Activated CD8-positive, alpha-beta T cell treated with anti-CD3 and anti-CD28 coated beads, Interleukin-2, amount 10 ng/mL, durations not matched to agents 7 days and 5 days (primary cell): ENCODE measurements at regions of chr3 and their contacts with region 1.

Region 1: DNA sequence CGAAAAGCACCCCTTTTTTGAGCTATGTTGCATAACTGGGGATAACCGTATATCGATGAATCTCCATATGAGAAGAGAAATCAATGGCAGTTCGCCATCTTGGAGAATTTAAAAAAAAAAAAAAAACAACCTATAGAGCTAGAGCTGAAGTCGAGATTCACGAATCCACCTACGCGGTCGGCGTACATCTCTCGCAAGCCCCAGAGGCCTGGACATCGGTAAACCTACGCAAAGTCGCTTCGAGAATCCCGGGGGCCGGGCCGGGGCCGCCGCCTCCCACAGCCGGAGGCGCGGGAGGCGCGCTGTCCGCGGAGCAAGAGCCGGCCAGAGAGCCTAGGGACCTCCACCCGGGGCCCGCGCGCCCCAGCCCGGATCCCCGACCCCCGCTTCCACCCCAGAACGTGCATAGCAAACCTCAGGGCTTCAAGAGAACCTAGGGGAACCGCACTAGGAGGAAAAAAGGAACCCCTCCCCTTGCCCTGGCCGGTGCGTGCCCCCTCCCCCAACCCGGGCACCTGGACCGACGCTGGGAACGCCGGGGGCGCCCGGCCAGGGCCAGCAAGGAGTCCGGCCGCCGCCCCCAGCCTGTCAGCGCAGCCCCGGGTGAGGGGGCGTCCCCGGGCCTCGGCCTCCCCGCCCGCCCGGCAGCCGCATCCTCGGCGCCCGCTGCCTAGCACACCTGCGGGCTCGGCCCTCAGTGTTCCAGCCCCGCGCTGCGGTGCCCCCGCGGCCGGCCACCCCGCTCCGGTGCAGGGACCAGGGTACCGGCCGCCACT is 567 bp downstream of the PFN2 start:
- DNase-seq: peak; percentile 68
- ATAC-seq: peak; percentile 66
- H3K4me3 Mint-ChIP-seq: peak overlapping the region; percentile 77
- H3K27ac Mint-ChIP-seq: no peak overlapping the region
- H3K4me1 Mint-ChIP-seq: peaks cover 15% of the 10 kb centered on the region
- H3K27me3 Mint-ChIP-seq: peaks cover 36% of the 10 kb centered on the region

Region 2: DNA sequence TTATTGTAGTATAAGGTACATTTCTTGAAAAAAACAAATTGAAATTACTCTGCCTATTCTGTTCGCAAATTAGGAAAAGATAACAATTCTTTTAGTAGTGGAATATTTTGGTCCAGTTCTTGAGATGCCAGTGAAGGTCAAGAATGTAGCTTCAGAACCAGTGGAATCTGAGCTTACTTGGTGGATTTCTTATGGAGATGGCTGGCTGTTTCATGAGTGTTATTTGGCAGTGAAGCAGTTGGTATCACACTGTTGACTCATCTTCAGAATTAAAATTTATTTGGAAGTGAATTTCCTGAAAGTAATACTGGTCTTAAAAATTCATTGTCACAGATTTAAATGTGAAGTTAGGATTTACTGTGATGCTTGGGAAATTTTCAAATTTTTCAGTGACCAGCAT is 138.0 kb before region 1 on chr3:
- CTCF ChIA-PET with region 1: no interaction called
- POLR2A ChIA-PET with region 1: no interaction called
- DNase-seq: no peak
- ATAC-seq: no peak
- H3K4me3 Mint-ChIP-seq: no peak overlapping the region
- H3K27ac Mint-ChIP-seq: no peak overlapping the region
- H3K4me1 Mint-ChIP-seq: no peaks in the 10 kb centered on the region
- H3K27me3 Mint-ChIP-seq: no peaks in the 10 kb centered on the region

Region 3: DNA sequence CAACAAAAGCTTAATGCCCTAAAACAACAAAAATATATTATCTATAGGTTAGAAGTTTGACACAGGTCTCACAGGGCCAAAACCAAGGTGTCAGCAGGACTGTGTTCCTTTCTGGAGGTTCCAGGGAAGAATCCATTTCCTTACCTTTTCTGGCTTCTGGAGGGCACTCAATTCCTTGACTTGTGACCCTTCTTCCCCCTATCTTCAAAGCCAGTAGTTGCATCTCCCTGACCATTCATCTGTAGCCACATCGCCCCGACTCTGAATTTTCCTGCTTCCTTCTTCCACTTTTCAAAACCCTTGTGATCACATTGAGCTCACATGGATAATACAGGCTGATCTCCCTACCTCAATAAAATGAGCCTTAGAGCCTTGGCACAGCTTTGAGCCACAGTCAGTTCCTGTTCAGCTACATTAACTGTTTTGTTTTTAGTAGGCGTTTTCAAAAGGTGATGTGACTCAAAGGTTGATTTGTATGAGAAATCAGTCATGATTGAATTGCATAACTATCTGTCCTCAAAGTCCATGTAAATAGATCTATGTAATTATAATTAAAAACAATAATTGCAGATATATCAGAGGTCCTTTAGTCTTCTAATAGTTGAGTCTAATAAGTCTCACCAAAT is 11.8 kb before region 1 on chr3:
- CTCF ChIA-PET with region 1: interaction called, 21 read pairs
- POLR2A ChIA-PET with region 1: no interaction called
- DNase-seq: no peak
- ATAC-seq: no peak
- H3K4me3 Mint-ChIP-seq: no peak overlapping the region
- H3K27ac Mint-ChIP-seq: no peak overlapping the region
- H3K4me1 Mint-ChIP-seq: peaks cover 10% of the 10 kb centered on the region
- H3K27me3 Mint-ChIP-seq: no peaks in the 10 kb centered on the region

Region 4: GRCh38 chr3:149990423-149990948 is 20.4 kb after region 1 on chr3:
- CTCF ChIA-PET with region 1: no interaction called
- POLR2A ChIA-PET with region 1: no interaction called
- DNase-seq: no peak
- ATAC-seq: no peak
- H3K4me3 Mint-ChIP-seq: no peak overlapping the region
- H3K27ac Mint-ChIP-seq: no peak overlapping the region
- H3K4me1 Mint-ChIP-seq: no peaks in the 10 kb centered on the region
- H3K27me3 Mint-ChIP-seq: peaks cover 7% of the 10 kb centered on the region